Left cardiac atrium (tissue), 4 donors: ENCODE measurements at regions of chr2 and their contacts with region 1.

Region 1: GRCh38 chr2:45494269-45494977 is 116.6 kb downstream of the SRBD1 start:
- DNase-seq: no peak
- ATAC-seq: no peak

Region 2: DNA sequence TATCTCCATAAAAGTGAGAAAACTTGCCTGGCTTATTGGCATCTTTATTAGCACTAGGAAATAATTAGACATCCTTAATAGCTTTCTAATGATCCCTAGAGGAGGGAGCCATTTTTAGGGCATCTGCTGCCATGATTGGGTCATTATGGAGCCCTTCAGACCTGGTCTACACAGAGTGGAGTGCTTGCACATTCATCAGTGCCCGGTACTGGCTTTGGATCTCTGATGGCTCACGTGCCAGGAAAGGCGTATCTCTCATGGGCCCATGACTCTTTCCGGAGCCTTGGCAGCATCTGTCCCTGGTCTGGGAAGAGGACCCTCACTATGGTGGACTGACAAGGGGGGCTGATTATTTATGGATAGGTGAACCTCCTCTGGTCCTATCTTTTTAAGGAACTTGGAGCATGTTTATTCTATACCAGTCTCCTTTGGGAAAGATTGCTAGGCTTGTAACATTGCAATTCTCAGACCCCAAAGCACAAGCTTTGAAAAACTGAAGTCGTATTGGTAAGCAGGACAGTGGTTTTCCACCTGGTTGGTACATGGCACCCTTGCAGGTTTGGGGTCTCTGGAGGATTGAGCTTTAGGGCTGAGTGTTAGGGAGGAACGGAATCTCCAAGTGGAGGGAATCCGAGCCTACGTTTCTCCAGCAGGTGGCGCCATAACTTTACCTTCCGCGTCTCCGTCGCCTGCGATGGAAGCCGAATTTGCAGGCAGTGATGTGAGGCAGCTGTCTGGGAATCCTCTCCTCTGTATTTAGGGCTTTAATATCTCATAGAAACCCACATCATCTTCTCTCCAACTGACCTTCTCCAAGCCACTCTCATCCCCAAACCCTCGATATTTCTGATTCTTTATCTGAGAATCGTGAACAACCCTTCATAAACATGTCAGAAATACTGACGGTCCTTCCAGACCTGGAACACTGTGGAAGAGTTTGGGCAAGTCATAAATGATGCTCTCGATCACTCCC is 513.0 kb before region 1 on chr2:
- intact Hi-C with region 1: loop called (anchors 1 to 2 kb)
- DNase-seq: peak; percentile 81
- ATAC-seq: peak; percentile 79 to 83

Region 3: GRCh38 chr2:45712570-45712969 is 218.1 kb after region 1 on chr2:
- intact Hi-C with region 1: no loop called
- DNase-seq: no peak
- ATAC-seq: no peak